HCT116 (cell line): ENCODE measurements at regions of chr17 and their contacts with region 1.

Region 1: DNA sequence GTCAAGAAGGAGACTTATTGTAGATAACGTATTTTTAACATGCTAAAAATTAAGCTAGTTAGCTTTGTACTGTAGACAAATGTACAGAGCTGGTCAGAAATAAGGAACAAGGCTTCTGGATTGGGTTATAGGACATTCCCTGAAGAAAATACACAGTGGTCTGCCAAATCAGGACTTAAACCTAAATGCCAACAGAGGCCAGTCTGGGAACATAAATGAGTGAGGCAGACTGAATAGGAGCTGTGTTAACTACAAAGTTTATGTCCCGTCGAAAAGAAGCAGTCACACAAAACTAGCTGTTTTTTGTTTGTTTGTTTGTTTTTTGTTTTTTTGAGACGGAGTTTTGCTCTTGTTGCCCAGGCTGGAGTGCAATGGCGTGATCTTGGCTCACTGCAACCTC is 120.4 kb upstream of the C17orf78 start:
- DNase-seq: no peak
- ATAC-seq: no peak
- H3K4me3 ChIP-seq: no peak overlapping the region
- H3K27ac ChIP-seq: no peak overlapping the region
- H3K4me1 ChIP-seq: no peaks in the 10 kb centered on the region
- H3K27me3 ChIP-seq: no peaks in the 10 kb centered on the region
- CTCF ChIP-seq: no peak
- POLR2A ChIP-seq: no peak
- RAD21 ChIP-seq: no peak

Region 2: GRCh38 chr17:37239690-37240334 is 15.6 kb before region 1 on chr17:
- CTCF ChIA-PET with region 1: interaction called, 10 read pairs
- POLR2A ChIA-PET with region 1: no interaction called
- RAD21 ChIA-PET with region 1: no interaction called
- intact Hi-C with region 1: no loop called
- DNase-seq: peak; percentile 3
- ATAC-seq: no peak
- H3K4me3 ChIP-seq: no peak overlapping the region
- H3K27ac ChIP-seq: no peak overlapping the region
- H3K4me1 ChIP-seq: no peaks in the 10 kb centered on the region
- H3K27me3 ChIP-seq: no peaks in the 10 kb centered on the region
- CTCF ChIP-seq: peak; percentile 56 to 71 (median 59); a peak in 5 of 6 replicates
- POLR2A ChIP-seq: no peak
- RAD21 ChIP-seq: peak; percentile 68

Region 3: DNA sequence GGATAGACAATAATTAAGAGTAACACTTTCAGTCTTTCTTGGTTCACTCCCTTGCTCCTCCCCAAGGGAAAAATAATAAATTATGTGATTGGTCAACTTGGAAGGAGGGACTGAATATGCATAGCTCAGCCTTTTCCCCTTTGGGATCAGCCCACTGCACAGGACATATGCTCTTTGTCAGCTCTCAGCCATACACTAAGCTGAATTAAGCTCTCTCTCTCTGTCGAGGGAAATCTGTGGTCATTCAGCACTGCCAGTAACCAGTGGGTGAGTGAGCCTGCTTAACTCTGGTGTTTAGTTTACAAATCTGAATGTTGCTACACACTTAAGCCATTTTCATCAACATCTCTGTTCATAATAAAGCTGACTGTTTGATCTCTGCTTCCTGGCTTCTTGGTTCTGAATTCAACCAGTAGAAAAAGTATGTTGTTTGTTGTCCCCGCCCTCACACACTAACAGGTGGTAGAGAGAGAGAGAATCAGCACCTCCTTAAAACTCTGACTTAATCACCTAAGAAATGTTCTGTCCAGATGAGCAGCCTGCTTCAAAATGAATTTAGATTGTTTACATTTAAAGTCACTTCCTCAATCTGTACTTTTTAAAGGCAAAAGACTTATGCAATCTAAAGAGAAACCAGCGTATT is 18.1 kb after region 1 on chr17:
- CTCF ChIA-PET with region 1: no interaction called
- POLR2A ChIA-PET with region 1: no interaction called
- RAD21 ChIA-PET with region 1: no interaction called
- intact Hi-C with region 1: no loop called
- DNase-seq: no peak
- ATAC-seq: peak; percentile 65
- H3K4me3 ChIP-seq: no peak overlapping the region
- H3K27ac ChIP-seq: no peak overlapping the region
- H3K4me1 ChIP-seq: peaks cover 10 to 24% of the 10 kb centered on the region in 2 experiments; a peak in 3 of 4 replicates
- H3K27me3 ChIP-seq: no peaks in the 10 kb centered on the region
- CTCF ChIP-seq: no peak
- POLR2A ChIP-seq: no peak
- RAD21 ChIP-seq: no peak